WTC11 (cell line): ENCODE measurements at regions of chr16 and their contacts with region 1.

Region 1: GRCh38 chr16:30429678-30430427 is at the start of gene DCTPP1:
- DNase-seq: peak; percentile 91
- ATAC-seq: peak; percentile 98
- H3K4me3 Mint-ChIP-seq: no peak within 1 kb of the TSS
- H3K27ac Mint-ChIP-seq: peak within 1 kb of the TSS; percentile 79
- H3K4me1 Mint-ChIP-seq: peaks cover 17% of the 10 kb centered on the region
- H3K27me3 Mint-ChIP-seq: peaks cover 22% of the 10 kb centered on the region
- CTCF ChIP-seq: peak; percentile 74
- total RNA-seq, gene DCTPP1: 69.0 to 72.2 TPM (median 70.5 TPM) in 3 replicates

Region 2: GRCh38 chr16:30370444-30371247 is 59.2 kb before region 1 on chr16 and contains the start of gene TBC1D10B:
- CTCF ChIA-PET with region 1: interaction called, 18 read pairs
- POLR2A ChIA-PET with region 1: interaction called, 6 read pairs
- DNase-seq: peak; percentile 99
- ATAC-seq: peak; percentile 91
- H3K4me3 Mint-ChIP-seq: peak within 1 kb of the TSS; percentile 80
- H3K27ac Mint-ChIP-seq: peak within 1 kb of the TSS; percentile 57
- H3K4me1 Mint-ChIP-seq: peaks cover 37% of the 10 kb centered on the region
- H3K27me3 Mint-ChIP-seq: no peaks in the 10 kb centered on the region; the same call in 1 of the 2 replicates
- CTCF ChIP-seq: no peak
- total RNA-seq, gene TBC1D10B: 33.4 to 40.5 TPM (median 34.6 TPM) in 3 replicates

Region 3: GRCh38 chr16:30383521-30383920 is 46.3 kb before region 1 on chr16:
- CTCF ChIA-PET with region 1: no interaction called
- POLR2A ChIA-PET with region 1: no interaction called
- DNase-seq: no peak
- ATAC-seq: no peak
- H3K4me3 Mint-ChIP-seq: no peak overlapping the region
- H3K27ac Mint-ChIP-seq: no peak overlapping the region
- H3K4me1 Mint-ChIP-seq: peaks cover 4% of the 10 kb centered on the region
- H3K27me3 Mint-ChIP-seq: peaks cover 13% of the 10 kb centered on the region
- CTCF ChIP-seq: no peak

Region 4: GRCh38 chr16:30458561-30459394 is 28.9 kb after region 1 on chr16:
- CTCF ChIA-PET with region 1: interaction called, 14 read pairs
- POLR2A ChIA-PET with region 1: no interaction called
- DNase-seq: no peak
- ATAC-seq: no peak; the same call in 1 of the 2 replicates
- H3K4me3 Mint-ChIP-seq: no peak overlapping the region
- H3K27ac Mint-ChIP-seq: no peak overlapping the region
- H3K4me1 Mint-ChIP-seq: no peaks in the 10 kb centered on the region; the same call in 1 of the 2 replicates
- H3K27me3 Mint-ChIP-seq: peaks cover 3% of the 10 kb centered on the region; the same call in 1 of the 2 replicates
- CTCF ChIP-seq: no peak

Region 5: DNA sequence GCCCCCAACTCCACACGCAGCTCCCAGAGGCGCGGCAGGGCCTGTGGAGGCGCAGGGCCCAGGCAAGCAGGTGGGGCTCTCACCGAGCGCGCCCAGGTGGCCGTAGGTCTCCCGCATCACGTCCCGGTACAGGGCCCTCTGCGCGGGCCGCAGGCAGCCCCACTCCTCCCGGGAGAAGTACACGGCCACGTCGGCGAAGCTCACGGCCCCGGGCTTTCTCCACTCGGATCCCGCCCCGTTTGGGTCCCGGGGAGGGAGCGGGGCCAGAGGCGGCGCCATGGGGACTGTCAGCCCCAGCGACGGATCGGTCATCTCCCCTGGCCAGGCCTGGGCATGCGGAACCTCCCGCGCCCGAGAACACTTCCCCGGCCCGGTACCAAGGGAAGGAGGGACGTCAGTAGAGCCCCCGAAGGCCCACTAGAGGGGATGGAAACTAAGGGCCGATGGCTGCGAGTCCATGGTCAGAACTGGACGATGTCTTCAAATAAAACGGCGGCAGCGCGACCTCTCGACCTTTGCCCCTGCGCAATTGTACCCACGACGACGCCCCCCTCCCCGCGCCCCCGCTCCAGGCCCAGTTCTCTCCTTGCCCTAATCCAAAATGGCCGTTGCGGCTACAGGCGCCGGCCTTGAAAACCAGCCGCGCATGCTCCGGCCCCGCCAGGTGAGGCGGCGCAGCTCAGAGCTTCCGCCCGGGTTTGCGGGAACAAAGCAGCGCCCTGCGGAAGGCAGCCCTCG is 104.7 kb after region 1 on chr16 and contains the start of gene ZNF747:
- CTCF ChIA-PET with region 1: interaction called, 41 read pairs
- POLR2A ChIA-PET with region 1: no interaction called
- DNase-seq: peak; percentile 89
- ATAC-seq: peak; percentile 68
- H3K4me3 Mint-ChIP-seq: peak within 1 kb of the TSS; percentile 95
- H3K27ac Mint-ChIP-seq: peak within 1 kb of the TSS; percentile 99
- H3K4me1 Mint-ChIP-seq: peaks cover 27% of the 10 kb centered on the region
- H3K27me3 Mint-ChIP-seq: no peaks in the 10 kb centered on the region
- CTCF ChIP-seq: no peak
- total RNA-seq, gene ZNF747: 11.3 to 11.7 TPM (median 11.5 TPM) in 3 replicates

Region 6: GRCh38 chr16:30585400-30586189 is 155.7 kb after region 1 on chr16 and contains the start of gene ZNF785:
- CTCF ChIA-PET with region 1: interaction called, 18 read pairs
- POLR2A ChIA-PET with region 1: interaction called, 7 read pairs
- DNase-seq: peak; percentile 96
- ATAC-seq: peak; percentile 91
- H3K4me3 Mint-ChIP-seq: peak within 1 kb of the TSS; percentile 89
- H3K27ac Mint-ChIP-seq: peak within 1 kb of the TSS; percentile 97
- H3K4me1 Mint-ChIP-seq: peaks cover 10% of the 10 kb centered on the region; the same call in 1 of the 2 replicates
- H3K27me3 Mint-ChIP-seq: no peaks in the 10 kb centered on the region
- CTCF ChIP-seq: no peak
- total RNA-seq, gene ZNF785: 15.4 to 16.5 TPM (median 16.0 TPM) in 3 replicates

Region 7: GRCh38 chr16:30628627-30629540 is 199.0 kb after region 1 on chr16:
- CTCF ChIA-PET with region 1: interaction called, 20 read pairs
- POLR2A ChIA-PET with region 1: interaction called, 4 read pairs
- DNase-seq: peak; percentile 94
- ATAC-seq: peak; percentile 95
- H3K4me3 Mint-ChIP-seq: no peak overlapping the region
- H3K27ac Mint-ChIP-seq: no peak overlapping the region
- H3K4me1 Mint-ChIP-seq: 0 out of 2 replicates have a peak, but pooled peaks cover 2% of the 10 kb centered on the region
- H3K27me3 Mint-ChIP-seq: peaks cover 23% of the 10 kb centered on the region
- CTCF ChIP-seq: peak; percentile 71